ENCODE measurements at regions of chr10 and their contacts with region 1.

Region 1: DNA sequence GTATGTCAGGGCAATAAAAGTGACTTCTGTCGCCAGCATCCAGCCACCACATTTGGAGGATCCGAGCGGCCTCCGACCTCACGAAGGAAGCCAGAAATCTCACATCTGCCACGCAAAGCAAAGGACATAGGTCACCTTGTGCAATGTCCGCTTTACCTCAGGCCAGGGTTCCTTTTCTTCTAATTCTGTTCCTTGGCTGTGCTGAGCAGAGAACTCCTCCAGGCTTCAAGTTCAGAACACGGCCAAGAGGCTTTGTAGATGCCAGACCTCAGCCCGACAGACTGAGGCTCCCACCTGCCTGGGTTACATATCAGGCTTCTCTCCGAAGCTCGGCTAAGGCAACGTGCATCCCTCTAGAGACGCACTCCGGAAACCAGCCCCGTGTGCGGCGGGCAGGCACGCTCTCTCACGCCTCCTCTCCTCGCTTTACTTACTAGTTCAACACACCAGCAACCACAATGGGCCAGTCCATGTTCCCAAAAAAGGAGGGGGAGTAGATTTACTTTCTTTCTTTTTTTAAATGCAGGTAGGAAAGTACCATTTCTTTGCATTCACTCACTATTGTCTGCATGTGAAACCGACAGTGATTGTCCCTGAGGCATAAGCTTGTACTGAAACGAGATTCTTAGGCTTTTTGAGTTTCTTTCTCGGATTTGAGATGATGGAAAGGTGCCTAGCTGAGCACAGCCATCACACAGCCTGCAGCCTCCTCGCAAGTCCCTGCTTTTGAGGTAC is 122.4 kb upstream of the AFAP1L2 start:
- DNase-seq: peak; percentile 95
- ATAC-seq: peak; percentile 98
- H3K4me3 ChIP-seq: peak overlapping the region; percentile 69
- H3K27ac ChIP-seq: peak overlapping the region; percentile 71
- H3K4me1 ChIP-seq: 0 out of 2 replicates have a peak, but pooled peaks cover 3% of the 10 kb centered on the region
- H3K27me3 ChIP-seq: no peaks in the 10 kb centered on the region; a peak in 1 of 4 replicates
- CTCF ChIP-seq: no peak
- EP300 ChIP-seq: peak in 1 of 2 experiments; percentile 64; a peak in 2 of 4 replicates
- POLR2A ChIP-seq: peak; percentile 90
- RAD21 ChIP-seq: 0 out of 2 replicates have a peak, but pooled peaks have one; percentile 4

Region 2: GRCh38 chr10:114437456-114438292 is 89.0 kb before region 1 on chr10:
- CTCF ChIA-PET with region 1: no interaction called
- POLR2A ChIA-PET with region 1: no interaction called
- RAD21 ChIA-PET with region 1: no interaction called
- SMC1A ChIA-PET with region 1: no interaction called
- in situ Hi-C with region 1: loop called (anchors 25 kb)
- intact Hi-C with region 1: no loop called
- DNase-seq: no peak
- ATAC-seq: peak; percentile 56
- H3K4me3 ChIP-seq: no peak overlapping the region
- H3K27ac ChIP-seq: no peak overlapping the region
- H3K4me1 ChIP-seq: no peaks in the 10 kb centered on the region
- H3K27me3 ChIP-seq: no peaks in the 10 kb centered on the region; a peak in 1 of 4 replicates
- CTCF ChIP-seq: peak; percentile 41 to 51 (median 44)
- EP300 ChIP-seq: no peak
- POLR2A ChIP-seq: no peak
- RAD21 ChIP-seq: peak; percentile 49; the same call in 1 of the 2 replicates

Region 3: DNA sequence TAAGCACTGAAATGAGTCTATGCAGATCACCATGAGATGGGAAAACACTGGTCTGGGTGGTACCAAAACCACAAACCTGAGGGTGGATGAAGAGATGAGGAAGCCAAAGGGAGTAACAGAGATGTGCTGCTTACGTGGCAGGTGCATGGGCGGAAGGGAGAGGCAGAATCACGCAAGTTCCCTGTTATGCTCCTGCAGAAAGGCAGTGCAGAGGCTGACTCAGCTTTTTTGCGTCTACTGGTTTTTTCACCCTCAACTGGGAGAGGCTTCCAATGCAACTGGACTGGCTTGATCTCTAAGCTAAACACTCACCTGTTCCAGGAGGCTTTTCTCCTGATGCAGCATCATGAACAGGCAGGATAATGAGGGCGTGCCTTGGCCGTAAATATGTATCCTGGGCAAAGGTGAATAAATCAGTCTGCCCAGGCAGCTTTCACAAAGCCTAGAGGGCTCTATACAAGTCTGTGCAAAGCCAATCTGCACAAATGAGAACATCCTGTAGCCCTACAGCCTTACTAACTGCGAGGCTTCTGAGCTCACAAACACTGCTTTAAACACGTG is 27.0 kb before region 1 on chr10:
- CTCF ChIA-PET with region 1: interaction called, 4 read pairs
- POLR2A ChIA-PET with region 1: interaction called, 8 read pairs
- RAD21 ChIA-PET with region 1: interaction called, 7 read pairs
- SMC1A ChIA-PET with region 1: interaction called, 14 read pairs
- in situ Hi-C with region 1: no loop called
- intact Hi-C with region 1: loop called (anchors 2 kb)
- DNase-seq: no peak
- ATAC-seq: peak; percentile 10
- H3K4me3 ChIP-seq: peak overlapping the region; percentile 13; the same call in 1 of the 2 replicates
- H3K27ac ChIP-seq: peak overlapping the region; percentile 95
- H3K4me1 ChIP-seq: peaks cover 40% of the 10 kb centered on the region
- H3K27me3 ChIP-seq: no peaks in the 10 kb centered on the region
- CTCF ChIP-seq: no peak
- EP300 ChIP-seq: no peak
- POLR2A ChIP-seq: peak; percentile 55
- RAD21 ChIP-seq: no peak

Region 4: DNA sequence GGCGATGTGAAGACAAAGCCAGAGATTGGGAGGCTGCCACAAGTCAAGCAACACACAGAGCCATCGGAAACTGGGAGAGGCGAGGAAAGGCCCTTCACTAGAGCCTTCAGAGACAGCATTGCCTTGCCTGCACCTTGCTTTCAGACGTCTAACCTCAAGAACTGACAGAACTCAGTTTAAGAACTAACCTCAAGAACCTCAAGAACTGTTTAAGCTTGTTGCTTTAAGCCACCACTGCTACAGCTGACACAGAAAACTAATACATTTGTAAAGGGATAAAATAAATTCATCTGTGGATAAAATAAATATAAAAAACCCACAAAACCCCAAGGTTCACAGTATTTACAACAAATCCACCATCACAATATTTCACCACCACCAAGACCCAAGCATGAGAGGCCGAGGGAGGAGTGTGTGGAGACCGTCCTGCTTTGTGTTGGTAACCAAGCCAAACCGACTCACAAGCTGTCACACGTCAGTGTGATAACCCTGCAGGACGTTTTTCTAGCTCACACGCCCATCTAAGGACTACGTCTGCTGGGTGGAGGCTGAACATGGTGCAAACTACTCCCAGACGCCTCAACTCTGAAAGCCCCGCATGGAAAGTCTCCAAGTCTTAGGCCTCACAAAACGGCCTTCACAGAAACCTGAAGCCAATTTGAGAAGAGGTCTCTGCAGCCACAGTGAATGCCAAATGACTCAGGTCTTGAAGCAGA is 14.6 kb after region 1 on chr10:
- CTCF ChIA-PET with region 1: interaction called, 9 read pairs
- POLR2A ChIA-PET with region 1: interaction called, 7 read pairs
- RAD21 ChIA-PET with region 1: interaction called, 13 read pairs
- SMC1A ChIA-PET with region 1: interaction called, 10 read pairs
- in situ Hi-C with region 1: no loop called
- intact Hi-C with region 1: no loop called
- DNase-seq: no peak
- ATAC-seq: peak; percentile 35
- H3K4me3 ChIP-seq: no peak overlapping the region
- H3K27ac ChIP-seq: no peak overlapping the region
- H3K4me1 ChIP-seq: peaks cover 51% of the 10 kb centered on the region
- H3K27me3 ChIP-seq: no peaks in the 10 kb centered on the region
- CTCF ChIP-seq: no peak
- EP300 ChIP-seq: no peak
- POLR2A ChIP-seq: no peak
- RAD21 ChIP-seq: no peak